Heart left ventricle (tissue), 16 donors: ENCODE measurements at regions of chr16 and their contacts with region 1.

Region 1: DNA sequence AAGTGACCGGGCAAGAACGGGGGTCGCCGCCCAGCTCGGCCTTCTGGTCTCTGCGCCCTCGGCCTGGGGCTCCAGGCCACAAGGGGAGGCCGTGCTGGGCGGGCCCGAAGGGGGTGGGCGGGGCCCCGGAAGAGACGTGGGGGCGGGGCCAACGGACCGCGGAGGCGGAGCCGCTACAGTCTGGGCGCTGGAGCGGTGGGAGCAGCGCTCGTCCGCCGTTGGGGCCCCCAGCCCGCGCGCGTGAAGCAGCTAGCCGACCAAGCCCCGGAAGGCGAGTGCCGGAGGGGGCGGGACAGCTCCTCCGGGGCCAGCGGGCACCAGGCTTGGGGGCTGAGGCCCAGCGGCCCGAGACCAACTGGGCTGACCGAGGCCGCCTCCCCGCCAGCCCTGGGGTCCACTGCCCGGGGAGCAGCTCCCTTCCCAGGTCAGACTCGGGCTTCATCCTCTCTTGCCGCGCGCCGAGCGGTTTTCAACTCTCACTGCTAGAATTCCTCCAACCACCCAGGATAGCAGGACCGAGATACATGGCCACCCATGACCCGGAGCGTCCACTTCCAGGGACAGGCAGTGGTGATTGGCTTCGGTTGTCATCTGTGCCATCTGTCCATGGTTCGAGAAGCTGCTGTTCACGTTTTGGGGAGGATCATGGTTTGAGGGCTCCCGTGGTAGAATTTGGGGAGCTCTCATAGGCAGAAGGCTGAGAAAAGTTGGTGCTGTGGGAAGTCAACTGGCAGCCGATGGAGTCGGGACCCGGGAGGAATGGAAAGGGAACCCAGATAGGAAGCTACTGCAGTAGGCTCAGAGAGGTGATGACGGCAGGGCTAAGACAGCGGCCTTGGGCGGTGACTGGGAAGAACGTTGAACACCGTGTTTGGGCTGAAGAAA is 44.6 kb upstream of the LCMT1 start:
- DNase-seq: peak; percentile 86 to 91 (median 89)
- ATAC-seq: peak; percentile 68 to 96 (median 93)
- H3K4me3 ChIP-seq: peak overlapping the region; percentile 46 to 91 (median 80)
- H3K27ac ChIP-seq: peak overlapping the region; percentile 83 to 97 (median 93)
- H3K4me1 ChIP-seq: peaks cover 0 to 35% (median 18%) of the 10 kb centered on the region in 12 donors
- H3K27me3 ChIP-seq: no peaks in the 10 kb centered on the region
- CTCF ChIP-seq: no peak
- POLR2A ChIP-seq: peak; percentile 46 to 93

Region 2: DNA sequence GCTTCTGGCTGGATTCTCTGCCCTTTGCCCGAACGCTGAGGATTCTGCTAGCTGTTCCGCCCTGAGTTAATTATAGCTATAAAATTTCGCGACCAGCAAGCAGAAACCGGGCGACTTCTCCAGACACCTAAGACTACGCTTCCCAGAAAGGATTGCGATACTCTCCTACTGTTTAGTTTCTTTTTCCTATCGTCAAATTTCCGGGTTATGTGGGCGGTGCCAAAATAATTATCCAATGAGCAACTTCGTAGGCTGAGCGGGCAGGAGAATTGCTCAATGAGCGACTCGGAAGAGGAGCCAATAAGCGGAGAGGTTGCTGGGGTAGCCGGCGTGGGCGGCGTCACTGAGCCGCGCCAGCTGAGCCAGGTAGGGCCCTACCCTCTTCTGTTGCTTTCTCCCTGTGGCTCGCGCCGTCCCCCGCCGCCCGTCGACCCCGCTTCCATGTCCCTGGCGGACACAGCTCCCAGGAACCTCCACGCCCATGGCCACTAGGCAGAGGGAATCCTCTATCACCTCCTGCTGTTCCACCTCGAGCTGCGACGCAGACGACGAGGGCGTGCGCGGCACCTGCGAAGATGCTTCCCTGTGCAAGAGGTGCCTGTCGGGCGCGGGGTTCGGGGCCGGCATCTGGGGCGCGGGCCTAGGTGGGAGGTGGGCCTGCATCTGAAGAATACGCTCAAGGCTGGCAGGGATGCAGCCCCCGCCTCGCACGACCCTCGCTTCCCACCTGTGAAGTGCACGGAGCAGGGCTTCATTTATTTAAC is 44.6 kb after region 1 on chr16 and contains the start of gene LCMT1:
- intact Hi-C with region 1: loop called (anchors 1 to 5 kb)
- DNase-seq: peak; percentile 89 to 94 (median 94)
- ATAC-seq: peak; percentile 85 to 91 (median 89)
- H3K4me3 ChIP-seq: peak within 1 kb of the TSS; percentile 47 to 99 (median 94)
- H3K27ac ChIP-seq: peak within 1 kb of the TSS; percentile 60 to 93 (median 87)
- H3K4me1 ChIP-seq: peaks cover 0 to 46% (median 34%) of the 10 kb centered on the region in 12 donors
- H3K27me3 ChIP-seq: no peaks in the 10 kb centered on the region
- CTCF ChIP-seq: peak in 3 of 12 donors; percentile 5 to 14 (median 9)
- POLR2A ChIP-seq: peak in 1 of 2 donors; percentile 69
- total RNA-seq, gene LCMT1: 33.6 to 50.0 (median 39.6) TPM